Calu3 (cell line): ENCODE measurements at regions of chr16 and their contacts with region 1.

Region 1: GRCh38 chr16:24010440-24011089 is 174.8 kb downstream of the PRKCB start:
- DNase-seq: peak; percentile 74
- H3K4me3 Mint-ChIP-seq: no peak overlapping the region
- H3K27ac Mint-ChIP-seq: no peak overlapping the region
- H3K4me1 Mint-ChIP-seq: no peaks in the 10 kb centered on the region
- H3K27me3 Mint-ChIP-seq: peaks cover 67% of the 10 kb centered on the region
- CTCF ChIP-seq: peak; percentile 80

Region 2: DNA sequence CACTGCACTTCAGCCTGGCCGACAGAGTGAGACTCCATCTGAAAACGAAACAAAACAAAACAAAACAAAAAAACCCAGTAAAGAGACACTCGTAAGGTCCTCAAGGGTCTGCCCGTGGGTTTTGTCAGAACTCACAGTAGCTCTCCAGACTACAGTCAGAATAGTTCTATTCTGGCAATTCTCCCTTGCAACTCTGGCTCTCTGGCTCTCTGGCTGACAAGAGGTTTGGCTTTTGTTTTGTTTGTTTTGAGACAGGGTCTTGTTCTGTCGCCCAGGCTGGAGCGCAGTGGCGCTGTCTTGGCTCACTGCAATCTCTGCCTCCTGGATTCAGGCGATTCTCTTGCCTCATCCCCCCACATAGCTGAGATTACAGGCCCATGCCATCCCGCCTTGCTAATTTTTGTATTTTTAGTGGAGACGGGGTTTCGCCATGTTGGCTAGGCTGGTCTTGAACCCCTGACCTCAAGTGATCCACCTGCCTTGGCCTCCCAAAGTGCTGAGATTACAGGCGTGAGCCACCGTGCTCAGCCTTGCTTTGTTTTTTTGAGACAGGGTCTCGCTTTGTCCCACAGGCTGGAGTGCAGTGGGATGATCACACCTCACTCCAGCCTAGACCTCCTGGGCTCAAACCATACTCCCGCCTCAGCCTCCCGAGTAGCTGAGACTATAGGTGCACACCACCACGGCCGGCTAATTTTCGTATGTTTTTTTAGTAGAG is 276.2 kb before region 1 on chr16:
- CTCF ChIA-PET with region 1: interaction called, 3 read pairs
- intact Hi-C with region 1: loop called (anchors 1 kb)
- DNase-seq: no peak
- H3K4me3 Mint-ChIP-seq: no peak overlapping the region
- H3K27ac Mint-ChIP-seq: no peak overlapping the region
- H3K4me1 Mint-ChIP-seq: peaks cover 8% of the 10 kb centered on the region
- H3K27me3 Mint-ChIP-seq: peaks cover 28% of the 10 kb centered on the region
- CTCF ChIP-seq: no peak